Activated naive CD4-positive, alpha-beta T cell treated with anti-CD3 and anti-CD28 coated beads, Interleukin-2, amount 10 ng/mL, durations not matched to agents 7 days and 5 days (primary cell): ENCODE measurements at regions of chr1 and their contacts with region 1.

Region 1: DNA sequence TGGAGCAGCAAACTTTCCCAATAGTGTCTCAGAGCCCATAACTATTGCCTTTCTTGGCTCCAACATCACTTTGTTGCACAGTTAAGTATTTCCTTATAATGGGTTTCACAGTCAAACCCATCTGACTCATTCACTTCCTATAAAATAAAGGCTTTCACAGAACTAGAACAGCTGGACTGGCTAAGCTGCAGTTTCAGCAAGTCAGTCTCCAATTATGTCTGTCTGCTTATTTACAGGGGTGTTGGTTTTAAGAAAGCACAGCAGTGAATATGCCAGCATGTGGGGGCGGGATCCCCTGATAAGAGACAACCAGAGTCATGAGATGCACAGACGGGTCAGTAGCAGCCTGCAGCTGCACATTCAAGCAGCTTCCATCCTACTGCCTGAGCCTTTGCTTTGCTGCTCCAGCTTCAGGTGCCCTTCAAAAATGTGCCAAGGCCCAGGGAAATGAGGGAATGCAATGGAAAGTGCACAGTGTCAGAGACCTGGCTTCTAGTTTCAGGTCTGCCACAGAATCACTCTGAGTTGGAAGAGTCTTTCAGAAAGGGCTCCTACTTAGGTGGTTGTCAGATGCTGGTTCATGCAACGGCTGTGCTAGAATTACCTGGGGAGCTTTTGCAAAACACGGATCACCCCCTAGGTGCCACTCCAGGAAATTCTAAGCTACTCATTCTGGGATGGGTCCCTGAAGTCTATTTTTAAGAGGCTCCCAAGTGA is 24.8 kb downstream of the RNF19B start:
- DNase-seq: no peak
- H3K4me3 Mint-ChIP-seq: no peak overlapping the region
- H3K27ac Mint-ChIP-seq: no peak overlapping the region
- H3K4me1 Mint-ChIP-seq: peaks cover 43% of the 10 kb centered on the region
- H3K27me3 Mint-ChIP-seq: no peaks in the 10 kb centered on the region

Region 2: GRCh38 chr1:32695098-32695904 is 244.5 kb before region 1 on chr1:
- CTCF ChIA-PET with region 1: no interaction called
- DNase-seq: no peak
- H3K4me3 Mint-ChIP-seq: no peak overlapping the region
- H3K27ac Mint-ChIP-seq: no peak overlapping the region
- H3K4me1 Mint-ChIP-seq: peaks cover 12% of the 10 kb centered on the region
- H3K27me3 Mint-ChIP-seq: peaks cover 25% of the 10 kb centered on the region

Region 3: DNA sequence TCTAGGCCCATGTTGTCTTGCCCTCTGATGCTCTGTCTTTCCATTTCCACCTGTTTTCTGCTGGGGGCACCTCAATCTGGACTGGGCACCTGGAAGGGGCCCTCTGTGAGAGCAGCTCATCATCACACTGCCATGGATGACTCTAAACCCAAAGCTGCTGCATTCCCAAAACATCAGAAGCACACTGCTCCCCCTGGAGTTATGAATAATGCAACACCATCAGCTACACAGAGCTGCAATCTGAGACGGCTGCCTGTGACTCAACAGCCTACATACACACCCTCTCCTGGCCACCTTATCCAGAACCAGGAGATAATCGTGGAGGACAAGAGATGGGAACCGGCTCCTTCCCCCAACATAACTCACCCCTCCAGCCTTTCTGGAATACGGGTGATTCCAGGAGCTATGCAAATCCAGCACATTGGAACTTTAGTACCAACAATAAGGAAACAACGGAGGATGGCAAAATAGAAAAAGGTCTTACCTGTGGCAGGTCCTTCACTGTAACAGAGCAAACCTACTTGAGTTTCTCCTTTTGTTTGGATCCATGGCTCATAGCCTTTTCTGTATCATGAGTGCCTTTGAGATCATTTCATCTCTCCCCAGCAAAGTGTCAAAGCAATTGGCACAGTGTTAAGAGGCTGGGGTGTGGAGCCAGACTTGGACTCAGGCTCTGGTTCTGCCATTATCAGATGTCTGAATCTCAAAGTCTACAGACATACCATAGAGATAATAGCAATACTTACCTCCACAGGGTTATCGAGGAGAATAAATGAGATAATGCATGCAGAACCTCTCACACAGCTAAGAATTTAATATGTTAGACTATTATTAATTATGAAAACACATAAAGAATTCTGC is 67.6 kb after region 1 on chr1:
- CTCF ChIA-PET with region 1: interaction called, 26 read pairs
- DNase-seq: peak; percentile 29
- H3K4me3 Mint-ChIP-seq: no peak overlapping the region
- H3K27ac Mint-ChIP-seq: no peak overlapping the region
- H3K4me1 Mint-ChIP-seq: peaks cover 2% of the 10 kb centered on the region
- H3K27me3 Mint-ChIP-seq: no peaks in the 10 kb centered on the region